ENCODE measurements at regions of chr12 and their contacts with region 1.

Region 1: DNA sequence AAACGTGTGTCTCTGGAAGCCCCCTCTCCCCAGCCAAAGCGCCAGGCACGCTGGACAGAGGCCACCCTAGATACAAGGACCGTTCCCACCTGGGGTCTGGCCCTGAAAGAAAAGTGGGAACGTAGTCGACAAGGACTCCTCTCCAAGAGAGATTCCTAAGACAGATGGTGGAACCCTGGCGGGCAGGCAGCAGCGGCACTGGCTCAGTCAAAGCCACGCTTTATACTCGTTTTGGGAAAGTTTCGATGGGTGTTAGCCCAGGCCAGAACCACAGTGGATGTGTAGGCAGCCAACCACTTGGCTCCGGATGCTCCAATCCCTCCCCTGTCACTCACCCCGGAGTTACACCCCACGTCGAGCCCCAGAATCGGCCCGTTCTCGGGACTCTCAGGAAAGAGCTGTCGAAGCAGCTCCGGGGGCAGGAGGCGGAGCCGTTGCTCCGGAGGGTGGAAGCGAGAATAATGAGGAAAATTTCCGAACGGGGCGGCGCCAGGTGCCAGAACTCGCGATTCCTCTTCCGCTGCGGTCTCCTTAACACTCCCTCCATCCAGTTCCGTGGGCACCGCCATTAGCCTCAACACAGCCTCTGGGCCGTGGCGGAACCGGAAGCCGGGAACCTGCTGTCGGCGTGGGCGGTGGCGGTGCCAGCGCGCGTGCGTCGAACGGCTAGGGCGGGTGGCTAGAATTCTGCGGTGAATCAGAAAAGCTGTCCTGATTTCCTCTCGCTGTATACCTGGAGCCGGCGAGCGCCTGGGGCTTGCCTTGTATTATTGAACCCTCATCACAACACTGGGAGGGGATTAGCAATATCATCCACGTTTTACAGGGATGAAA is at the start of gene BCDIN3D:
- DNase-seq: peak; percentile 95
- H3K4me3 ChIP-seq: peak within 1 kb of the TSS; percentile 11 to 62 (median 54)
- H3K27ac ChIP-seq: peak within 1 kb of the TSS; percentile 86 to 94 (median 94)
- H3K4me1 ChIP-seq: peaks cover 0 to 18% (median 15%) of the 10 kb centered on the region in 4 donors
- H3K27me3 ChIP-seq: peaks cover 3% of the 10 kb centered on the region
- CTCF ChIP-seq: no peak
- EP300 ChIP-seq: no peak
- POLR2A ChIP-seq: peak; percentile 82
- total RNA-seq, gene BCDIN3D: 0.20 to 2.4 (median 2.0) TPM

Region 2: DNA sequence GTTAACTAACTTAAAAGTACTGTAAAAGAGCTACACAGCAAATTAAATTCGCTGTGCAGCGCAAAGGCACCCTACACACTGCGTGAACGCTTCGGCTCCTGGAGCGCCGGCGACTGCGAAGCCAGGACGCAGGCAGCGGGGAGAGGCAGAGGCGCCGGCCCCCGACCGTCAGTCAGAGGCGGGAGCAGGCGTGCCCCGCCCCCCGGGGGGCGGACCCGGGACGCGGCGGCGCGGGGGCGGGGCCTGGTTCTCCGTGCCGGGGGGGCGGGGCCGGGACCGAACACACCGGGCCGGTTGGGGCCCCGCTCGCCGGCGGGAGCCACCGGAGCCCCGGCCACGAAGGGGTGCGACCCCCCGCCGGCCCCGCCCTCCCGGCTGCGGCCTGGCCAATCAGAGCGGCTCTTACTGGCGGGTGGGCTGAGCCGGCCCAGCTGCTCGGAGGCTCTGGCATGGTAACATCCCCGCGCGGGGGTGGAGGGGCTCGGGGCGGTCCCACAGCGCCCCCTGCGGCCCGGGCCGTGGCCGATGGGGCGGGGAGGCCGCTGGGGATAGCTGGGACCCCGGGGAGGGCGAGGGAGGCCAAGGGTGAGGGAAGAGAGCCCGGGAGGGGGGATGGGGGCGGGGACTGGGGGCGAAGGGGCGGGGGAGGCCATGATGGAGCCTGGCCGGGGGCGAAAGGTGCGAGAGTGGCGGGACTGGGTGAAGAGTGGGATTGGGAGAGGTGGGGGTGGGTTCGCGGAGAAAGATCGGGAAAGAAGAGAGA is 219.4 kb before region 1 on chr12 and contains the start of gene PRPF40B:
- in situ Hi-C with region 1: no loop called
- intact Hi-C with region 1: no loop called
- DNase-seq: peak; percentile 91
- H3K4me3 ChIP-seq: peak within 1 kb of the TSS; percentile 49 to 70 (median 53)
- H3K27ac ChIP-seq: peak within 1 kb of the TSS; percentile 76 to 89 (median 86)
- H3K4me1 ChIP-seq: peaks cover 6 to 25% (median 16%) of the 10 kb centered on the region in 4 donors
- H3K27me3 ChIP-seq: no peaks in the 10 kb centered on the region
- CTCF ChIP-seq: peak in 4 of 5 experiments; percentile 27 to 56 (median 48)
- EP300 ChIP-seq: no peak
- POLR2A ChIP-seq: peak; percentile 79
- total RNA-seq, gene PRPF40B: 3.7 to 12.7 (median 8.7) TPM

Region 3: GRCh38 chr12:49651855-49652254 is 190.9 kb before region 1 on chr12:
- in situ Hi-C with region 1: no loop called
- intact Hi-C with region 1: no loop called
- DNase-seq: no peak
- H3K4me3 ChIP-seq: no peak overlapping the region
- H3K27ac ChIP-seq: no peak overlapping the region
- H3K4me1 ChIP-seq: peaks cover 0 to 7% (median 0%) of the 10 kb centered on the region in 4 donors
- H3K27me3 ChIP-seq: no peaks in the 10 kb centered on the region
- CTCF ChIP-seq: no peak
- EP300 ChIP-seq: no peak
- POLR2A ChIP-seq: no peak

Region 4: DNA sequence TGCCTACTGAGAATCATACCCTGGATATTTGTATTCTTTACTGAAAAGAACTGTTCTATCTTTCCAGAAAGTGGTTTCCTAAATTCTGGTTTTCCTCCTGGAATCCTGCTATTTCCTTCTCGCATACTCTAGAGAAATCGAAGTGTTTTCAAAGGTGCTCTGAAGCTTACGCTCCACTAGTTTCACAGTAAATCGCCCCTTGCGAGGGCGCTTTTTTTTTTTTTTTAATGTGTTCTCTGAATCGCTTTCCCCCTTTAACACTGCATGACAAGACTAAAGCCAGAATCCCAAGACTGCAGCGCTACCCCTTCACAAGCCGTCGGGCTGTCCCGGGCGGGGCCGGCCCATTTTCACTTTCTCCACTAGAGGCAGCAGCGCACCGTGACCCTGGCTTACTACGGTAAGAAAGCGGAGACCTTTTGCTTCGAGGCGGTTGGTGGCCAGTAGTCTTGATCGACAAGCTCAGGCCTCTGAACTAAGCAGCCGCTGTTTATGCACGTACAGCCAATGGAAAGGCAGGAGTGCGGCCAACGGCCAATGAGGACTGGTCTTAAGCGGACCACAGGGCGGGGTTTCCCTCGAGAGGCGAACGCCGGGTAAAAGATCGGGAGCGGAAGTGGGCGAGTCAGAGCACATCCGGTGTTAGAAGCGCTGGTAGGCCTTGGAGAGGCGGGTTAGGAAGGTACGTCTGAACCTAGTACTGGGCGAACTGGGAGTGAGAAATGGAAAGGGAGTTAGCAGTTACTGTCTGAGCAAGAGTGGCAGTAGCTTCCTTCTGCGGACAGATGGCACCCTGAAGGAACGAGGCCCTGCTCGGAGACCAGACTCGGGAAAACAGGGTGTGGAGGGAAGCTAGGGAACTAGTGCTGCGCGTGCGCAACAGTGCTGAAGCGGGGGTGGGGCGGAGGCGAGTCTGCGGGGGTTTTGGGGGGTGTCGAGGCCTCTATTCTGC is 101.5 kb before region 1 on chr12 and contains the start of gene TMBIM6:
- in situ Hi-C with region 1: no loop called
- intact Hi-C with region 1: no loop called
- DNase-seq: peak; percentile 99
- H3K4me3 ChIP-seq: peak within 1 kb of the TSS; percentile 33 to 75 (median 58)
- H3K27ac ChIP-seq: peak within 1 kb of the TSS; percentile 92 to 98 (median 96)
- H3K4me1 ChIP-seq: peaks cover 19 to 42% (median 32%) of the 10 kb centered on the region in 4 donors
- H3K27me3 ChIP-seq: no peaks in the 10 kb centered on the region
- CTCF ChIP-seq: peak; percentile 85 to 99 (median 93)
- EP300 ChIP-seq: no peak
- POLR2A ChIP-seq: peak; percentile 100
- total RNA-seq, gene TMBIM6: 234 to 709 (median 558) TPM

Region 5: GRCh38 chr12:49763006-49763591 is 79.6 kb before region 1 on chr12:
- in situ Hi-C with region 1: no loop called
- intact Hi-C with region 1: loop called (anchors 5 kb)
- DNase-seq: peak; percentile 75
- H3K4me3 ChIP-seq: no peak overlapping the region
- H3K27ac ChIP-seq: no peak overlapping the region
- H3K4me1 ChIP-seq: no peaks in the 10 kb centered on the region
- H3K27me3 ChIP-seq: no peaks in the 10 kb centered on the region
- CTCF ChIP-seq: peak; percentile 34 to 66 (median 61)
- EP300 ChIP-seq: no peak
- POLR2A ChIP-seq: no peak

Region 6: DNA sequence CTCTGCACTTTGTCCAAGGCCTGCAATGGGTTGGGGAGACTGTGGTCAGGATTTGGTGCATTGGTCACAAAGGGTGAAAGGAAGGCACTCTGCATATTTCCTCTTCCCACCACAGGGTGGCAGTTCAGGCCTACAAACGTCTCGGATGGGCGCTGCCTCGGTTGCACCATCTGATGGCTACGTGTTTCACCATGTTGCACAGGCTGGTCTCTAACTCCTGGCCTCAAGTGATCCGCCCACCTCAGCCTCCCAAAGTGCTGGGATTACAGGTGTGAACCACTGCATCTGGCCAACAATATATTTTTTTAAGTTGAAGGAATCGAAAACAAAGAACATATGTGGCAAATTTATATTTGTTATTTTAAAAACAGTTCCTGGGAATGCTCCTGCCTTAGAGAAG is 66.3 kb before region 1 on chr12:
- in situ Hi-C with region 1: loop called in 1 of 4 experiments (anchors 10 kb)
- intact Hi-C with region 1: no loop called
- DNase-seq: peak; percentile 59
- H3K4me3 ChIP-seq: no peak overlapping the region
- H3K27ac ChIP-seq: no peak overlapping the region
- H3K4me1 ChIP-seq: peaks cover 0 to 5% (median 0%) of the 10 kb centered on the region in 4 donors
- H3K27me3 ChIP-seq: no peaks in the 10 kb centered on the region
- CTCF ChIP-seq: peak; percentile 63 to 74 (median 69)
- EP300 ChIP-seq: no peak
- POLR2A ChIP-seq: no peak

Region 7: DNA sequence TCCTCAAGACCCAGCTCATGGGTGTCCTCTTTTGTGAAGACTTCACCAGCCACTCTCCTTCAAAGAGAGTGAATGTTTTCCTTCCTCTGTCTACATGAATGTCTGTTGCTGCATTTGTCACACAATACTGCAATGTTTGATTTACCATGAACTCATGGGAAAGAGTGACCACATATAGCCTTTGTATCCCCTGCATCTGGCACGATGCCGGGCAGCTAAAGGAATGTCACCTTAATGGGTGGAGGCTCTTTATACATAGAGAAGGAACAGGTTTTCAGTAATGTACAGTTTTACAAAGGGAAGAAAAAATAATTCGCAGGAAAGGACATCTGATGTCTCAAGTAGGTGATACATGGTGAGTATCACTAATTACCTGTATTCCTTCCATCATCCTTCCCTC is 12.3 kb after region 1 on chr12:
- in situ Hi-C with region 1: no loop called
- intact Hi-C with region 1: no loop called
- DNase-seq: no peak
- H3K4me3 ChIP-seq: no peak overlapping the region
- H3K27ac ChIP-seq: no peak overlapping the region
- H3K4me1 ChIP-seq: no peaks in the 10 kb centered on the region
- H3K27me3 ChIP-seq: peaks cover 9% of the 10 kb centered on the region
- CTCF ChIP-seq: no peak
- EP300 ChIP-seq: no peak
- POLR2A ChIP-seq: no peak

Measured in transverse colon (tissue), 4 donors.